ENCODE measurements at regions of chr1 and their contacts with region 1.

Region 1: GRCh38 chr1:243216741-243217140 is 38.3 kb downstream of the CEP170 start:
- DNase-seq: peak; percentile 34
- ATAC-seq: no peak
- H3K4me3 ChIP-seq: no peak overlapping the region
- H3K27ac ChIP-seq: no peak overlapping the region
- H3K4me1 ChIP-seq: peaks cover 8% of the 10 kb centered on the region
- H3K27me3 ChIP-seq: no peaks in the 10 kb centered on the region
- CTCF ChIP-seq: no peak
- POLR2A ChIP-seq: no peak
- RAD21 ChIP-seq: no peak

Region 2: DNA sequence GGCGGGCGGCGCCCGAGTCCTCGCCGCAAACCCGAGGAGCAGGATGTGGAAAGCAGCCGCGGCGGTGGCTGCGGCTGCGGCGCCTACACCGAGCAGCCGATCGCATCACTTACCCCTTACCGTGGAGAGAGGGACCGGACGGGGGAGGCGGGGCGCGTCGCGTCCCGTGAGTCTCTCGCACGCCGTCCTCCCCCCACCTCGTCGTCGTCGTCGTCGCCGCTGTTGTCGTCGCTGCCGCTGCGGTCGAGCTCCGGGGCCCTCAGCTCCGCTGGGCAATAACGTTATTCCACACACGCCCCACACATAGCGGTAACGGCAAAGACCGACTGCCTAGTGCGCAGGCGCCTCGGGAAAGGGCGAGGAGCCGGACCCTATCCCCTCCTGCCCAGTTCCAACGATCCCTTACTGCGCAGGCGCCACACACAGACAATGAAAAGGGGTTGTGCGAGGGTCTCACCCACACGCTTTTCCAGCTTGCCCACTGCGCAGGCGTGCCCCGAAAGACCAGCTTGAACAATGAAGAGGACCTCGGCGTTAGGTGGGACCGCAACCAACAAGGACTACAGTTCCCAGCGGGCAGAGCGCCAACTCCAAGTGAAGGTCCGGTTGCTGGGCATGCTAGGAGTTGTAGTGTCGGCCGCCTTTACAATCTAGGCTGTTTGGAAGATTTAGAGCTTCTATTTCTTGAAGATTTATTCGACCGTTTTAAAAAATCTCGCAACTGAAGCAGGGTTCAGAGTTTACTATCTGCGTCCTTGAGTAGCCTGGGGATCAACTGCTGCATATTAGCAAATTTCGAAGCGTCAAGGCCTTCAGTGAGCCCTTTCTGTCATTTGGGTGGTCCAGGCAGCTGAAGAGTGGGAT is 38.4 kb after region 1 on chr1 and contains the start of gene CEP170:
- CTCF ChIA-PET with region 1: no interaction called
- POLR2A ChIA-PET with region 1: no interaction called
- dilution Hi-C with region 1: no loop called
- in situ Hi-C with region 1: no loop called
- intact Hi-C with region 1: loop called (anchors 5 kb)
- DNase-seq: peak; percentile 97
- ATAC-seq: peak; percentile 75
- H3K4me3 ChIP-seq: peak within 1 kb of the TSS; percentile 86
- H3K27ac ChIP-seq: peak within 1 kb of the TSS; percentile 89
- H3K4me1 ChIP-seq: no peaks in the 10 kb centered on the region; the same call in 1 of the 2 replicates
- H3K27me3 ChIP-seq: no peaks in the 10 kb centered on the region
- CTCF ChIP-seq: no peak
- POLR2A ChIP-seq: no peak
- RAD21 ChIP-seq: no peak
- total RNA-seq, gene CEP170: 151 and 196 TPM in 2 replicates

Region 3: GRCh38 chr1:243623841-243624240 is 407.1 kb after region 1 on chr1:
- CTCF ChIA-PET with region 1: no interaction called
- POLR2A ChIA-PET with region 1: no interaction called
- dilution Hi-C with region 1: no loop called
- in situ Hi-C with region 1: no loop called
- intact Hi-C with region 1: no loop called
- DNase-seq: peak; percentile 86
- ATAC-seq: peak; percentile 70
- H3K4me3 ChIP-seq: no peak overlapping the region
- H3K27ac ChIP-seq: no peak overlapping the region
- H3K4me1 ChIP-seq: peaks cover 4% of the 10 kb centered on the region; the same call in 1 of the 2 replicates
- H3K27me3 ChIP-seq: no peaks in the 10 kb centered on the region
- CTCF ChIP-seq: no peak
- POLR2A ChIP-seq: no peak
- RAD21 ChIP-seq: no peak